Naive thymus-derived CD4-positive, alpha-beta T cell (primary cell): ENCODE measurements at regions of chr3 and their contacts with region 1.

Region 1: DNA sequence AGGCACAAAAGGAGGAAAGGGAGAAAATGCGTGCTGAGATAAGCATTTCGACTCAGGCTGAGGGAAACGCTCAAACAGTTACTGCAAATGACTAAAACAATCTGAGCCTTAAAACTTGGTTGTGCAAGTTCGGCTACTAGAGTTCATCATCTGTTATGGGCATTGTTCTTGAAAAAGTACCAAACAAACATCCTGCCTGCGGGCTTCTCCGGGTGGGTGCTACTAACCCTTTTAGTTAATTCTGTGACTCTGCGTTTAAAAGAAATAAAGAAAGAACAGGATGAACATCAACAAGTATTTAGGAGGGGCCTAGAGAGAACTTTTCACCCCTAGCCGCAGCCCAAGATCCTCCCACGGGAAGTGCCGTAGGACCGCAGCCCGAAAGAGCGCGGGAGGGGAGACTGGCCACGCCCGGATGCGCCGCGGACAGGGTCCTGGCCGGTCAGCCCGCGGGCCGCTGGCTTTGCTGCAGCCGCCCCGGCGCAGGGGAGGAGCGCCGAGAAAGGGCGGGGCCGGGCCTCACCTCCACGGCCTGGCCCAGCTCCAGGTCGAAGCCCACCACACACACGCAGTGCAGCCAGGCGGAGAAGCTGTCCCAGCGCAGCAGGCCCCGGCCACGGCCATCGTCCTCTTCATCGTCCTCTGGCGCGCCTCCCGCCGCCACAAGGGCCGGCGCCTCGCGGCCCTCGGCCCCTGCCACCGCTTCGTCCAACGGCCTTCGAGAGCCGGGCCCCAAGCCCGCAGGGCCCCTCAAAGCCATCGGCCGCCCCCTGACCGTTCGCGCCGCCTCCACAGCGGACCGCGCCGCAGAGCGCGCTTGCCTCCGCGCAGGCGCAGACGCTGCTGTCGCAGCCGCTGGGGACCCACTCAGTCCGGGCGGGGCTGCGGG is at the start of gene DENND6A:
- DNase-seq: peak; percentile 88 to 96 (median 94)
- ATAC-seq: peak; percentile 89
- H3K4me3 ChIP-seq: peak within 1 kb of the TSS; percentile 81
- H3K4me3 Mint-ChIP-seq: peak within 1 kb of the TSS; percentile 82 to 98 (median 93)
- H3K27ac ChIP-seq: peak within 1 kb of the TSS; percentile 87
- H3K27ac Mint-ChIP-seq: peak within 1 kb of the TSS; percentile 88 to 96 (median 93)
- H3K4me1 ChIP-seq: peaks cover 30 to 35% of the 10 kb centered on the region in 2 donors
- H3K4me1 Mint-ChIP-seq: peaks cover 19 to 42% (median 39%) of the 10 kb centered on the region in 7 donors
- H3K27me3 ChIP-seq: no peaks in the 10 kb centered on the region
- H3K27me3 Mint-ChIP-seq: peaks cover 0 to 2% (median 0%) of the 10 kb centered on the region in 5 donors
- total RNA-seq, gene DENND6A: 31.3 to 76.6 (median 40.8) TPM

Region 2: DNA sequence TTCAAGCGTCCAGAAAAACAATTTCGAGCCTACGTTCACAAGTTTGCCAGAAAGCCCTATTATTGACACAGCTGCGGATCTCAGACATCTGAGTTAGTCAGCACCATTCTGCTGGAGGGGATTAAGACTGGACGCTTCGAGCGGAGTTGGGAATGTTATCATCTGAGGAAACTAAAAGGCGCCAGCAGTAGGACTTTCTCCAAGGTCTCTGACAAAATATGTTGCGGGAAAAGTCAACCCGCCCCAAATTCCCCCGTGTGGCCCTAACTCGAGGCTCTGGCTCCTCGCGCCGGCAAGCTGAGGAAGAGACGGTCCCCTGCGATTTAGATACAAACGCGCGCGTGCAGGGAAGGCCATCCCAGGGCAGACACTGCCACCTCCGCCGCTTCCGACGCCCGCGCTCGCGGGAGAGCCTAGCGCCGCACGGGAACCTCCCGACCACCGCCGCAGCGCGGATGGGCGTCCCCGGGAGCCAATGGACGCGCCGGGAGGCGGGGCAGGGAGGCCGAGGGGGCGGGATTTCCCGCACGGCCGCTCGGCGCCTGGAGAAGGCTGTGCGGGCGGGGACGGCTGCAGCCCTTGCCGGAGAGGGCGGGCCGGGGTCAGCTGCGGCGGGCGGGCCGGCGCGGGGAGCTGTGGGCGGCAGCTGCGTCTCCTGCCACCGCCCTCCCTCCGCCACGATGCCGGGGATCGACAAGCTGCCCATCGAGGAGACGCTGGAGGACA is 465.1 kb before region 1 on chr3 and contains the start of gene APPL1:
- CTCF ChIA-PET with region 1: no interaction called
- POLR2A ChIA-PET with region 1: no interaction called
- intact Hi-C with region 1: loop called in 1 of 2 experiments (anchors 5 kb)
- DNase-seq: peak; percentile 76 to 97 (median 82)
- ATAC-seq: peak; percentile 96
- H3K4me3 ChIP-seq: peak within 1 kb of the TSS; percentile 88
- H3K4me3 Mint-ChIP-seq: peak within 1 kb of the TSS; percentile 89 to 95 (median 93)
- H3K27ac ChIP-seq: peak within 1 kb of the TSS; percentile 71
- H3K27ac Mint-ChIP-seq: peak within 1 kb of the TSS; percentile 72 to 90 (median 86)
- H3K4me1 ChIP-seq: peaks cover 9 to 12% of the 10 kb centered on the region in 2 donors
- H3K4me1 Mint-ChIP-seq: peaks cover 17 to 38% (median 29%) of the 10 kb centered on the region in 7 donors
- H3K27me3 ChIP-seq: no peaks in the 10 kb centered on the region
- H3K27me3 Mint-ChIP-seq: peaks cover 0 to 5% (median 0%) of the 10 kb centered on the region in 5 donors
- total RNA-seq, gene APPL1: 25.4 to 42.1 (median 29.2) TPM

Region 3: GRCh38 chr3:57545636-57546268 is 146.8 kb before region 1 on chr3:
- CTCF ChIA-PET with region 1: no interaction called
- POLR2A ChIA-PET with region 1: no interaction called
- intact Hi-C with region 1: no loop called
- DNase-seq: no peak
- ATAC-seq: no peak
- H3K4me3 ChIP-seq: no peak overlapping the region
- H3K4me3 Mint-ChIP-seq: no peak overlapping the region
- H3K27ac ChIP-seq: no peak overlapping the region
- H3K27ac Mint-ChIP-seq: no peak overlapping the region
- H3K4me1 ChIP-seq: no peaks in the 10 kb centered on the region
- H3K4me1 Mint-ChIP-seq: peaks cover 0 to 10% (median 8%) of the 10 kb centered on the region in 7 donors
- H3K27me3 ChIP-seq: no peaks in the 10 kb centered on the region
- H3K27me3 Mint-ChIP-seq: peaks cover 0 to 12% (median 8%) of the 10 kb centered on the region in 5 donors

Region 4: GRCh38 chr3:57597122-57597923 is 95.2 kb before region 1 on chr3 and contains the start of gene ARF4:
- CTCF ChIA-PET with region 1: no interaction called
- POLR2A ChIA-PET with region 1: interaction called, 36 read pairs
- intact Hi-C with region 1: loop called (anchors 1 kb)
- DNase-seq: peak; percentile 99 to 100 (median 100)
- ATAC-seq: peak; percentile 93
- H3K4me3 ChIP-seq: peak within 1 kb of the TSS; percentile 86
- H3K4me3 Mint-ChIP-seq: peak within 1 kb of the TSS; percentile 91 to 99 (median 98)
- H3K27ac ChIP-seq: peak within 1 kb of the TSS; percentile 94
- H3K27ac Mint-ChIP-seq: peak within 1 kb of the TSS; percentile 95 to 100 (median 99)
- H3K4me1 ChIP-seq: peaks cover 29 to 30% of the 10 kb centered on the region in 2 donors
- H3K4me1 Mint-ChIP-seq: peaks cover 33 to 64% (median 51%) of the 10 kb centered on the region in 7 donors
- H3K27me3 ChIP-seq: no peaks in the 10 kb centered on the region
- H3K27me3 Mint-ChIP-seq: no peaks in the 10 kb centered on the region
- total RNA-seq, gene ARF4: 50.9 to 85.5 (median 57.5) TPM

Region 5: DNA sequence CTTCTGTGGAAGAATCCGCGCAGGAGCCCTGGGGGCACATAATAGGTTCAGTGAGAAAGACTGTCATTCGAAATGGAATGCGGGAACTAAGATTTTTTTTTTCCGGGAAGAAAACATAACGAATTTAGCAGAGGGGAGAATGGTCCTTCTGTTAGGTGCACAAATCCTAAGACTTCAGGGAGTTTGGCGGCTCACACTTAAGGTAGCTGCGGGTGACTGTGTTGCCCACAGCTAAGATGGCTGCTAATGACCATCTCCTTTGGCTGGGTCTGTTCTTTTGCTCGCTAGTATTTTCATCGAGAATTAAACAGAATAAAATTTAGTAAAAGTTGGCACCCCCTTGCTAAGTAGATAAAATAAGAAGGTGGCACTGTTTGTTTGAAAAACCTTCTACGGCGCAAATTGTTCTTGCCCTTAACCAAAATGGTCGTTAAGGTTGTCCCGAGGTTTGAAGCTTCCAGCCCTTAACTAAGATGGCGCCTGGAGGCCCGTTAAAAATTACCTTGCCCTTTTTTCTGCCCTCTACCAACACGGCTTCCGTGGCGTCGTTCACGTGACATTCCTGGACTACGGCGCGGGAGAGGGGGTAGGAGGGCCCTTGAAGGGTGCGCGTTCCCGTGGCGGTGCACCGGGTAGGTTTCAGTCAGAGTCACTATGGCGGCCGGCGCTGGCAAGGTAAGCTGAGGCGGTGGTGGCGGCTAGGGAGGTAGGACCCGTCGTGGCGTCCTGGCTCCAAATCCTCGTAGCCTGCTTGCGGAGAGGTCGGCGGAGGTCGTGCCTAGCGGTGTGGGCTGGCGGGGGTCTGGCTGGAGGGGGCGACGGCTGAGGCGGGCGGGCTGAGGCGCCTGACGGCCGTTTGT is 63.4 kb after region 1 on chr3 and contains the start of gene SLMAP:
- CTCF ChIA-PET with region 1: no interaction called
- POLR2A ChIA-PET with region 1: interaction called, 20 read pairs
- intact Hi-C with region 1: loop called (anchors 1 kb)
- DNase-seq: peak; percentile 84 to 97 (median 95)
- ATAC-seq: peak; percentile 98
- H3K4me3 ChIP-seq: peak within 1 kb of the TSS; percentile 80
- H3K4me3 Mint-ChIP-seq: peak within 1 kb of the TSS; percentile 92 to 98 (median 97)
- H3K27ac ChIP-seq: peak within 1 kb of the TSS; percentile 84
- H3K27ac Mint-ChIP-seq: peak within 1 kb of the TSS; percentile 88 to 96 (median 92)
- H3K4me1 ChIP-seq: peaks cover 23 to 29% of the 10 kb centered on the region in 2 donors
- H3K4me1 Mint-ChIP-seq: peaks cover 17 to 45% (median 41%) of the 10 kb centered on the region in 7 donors
- H3K27me3 ChIP-seq: no peaks in the 10 kb centered on the region
- H3K27me3 Mint-ChIP-seq: peaks cover 0 to 8% (median 0%) of the 10 kb centered on the region in 5 donors
- total RNA-seq, gene SLMAP: 54.6 to 77.1 (median 66.6) TPM

Region 6: GRCh38 chr3:58034738-58035523 is 342.4 kb after region 1 on chr3:
- CTCF ChIA-PET with region 1: no interaction called
- POLR2A ChIA-PET with region 1: no interaction called
- intact Hi-C with region 1: loop called in 1 of 2 experiments (anchors 2 kb)
- DNase-seq: peak in 8 of 9 donors; percentile 41 to 83 (median 69)
- ATAC-seq: peak; percentile 95
- H3K4me3 ChIP-seq: no peak overlapping the region
- H3K4me3 Mint-ChIP-seq: peak overlapping the region; percentile 13 to 74 (median 50)
- H3K27ac ChIP-seq: peak overlapping the region; percentile 48
- H3K27ac Mint-ChIP-seq: peak overlapping the region; percentile 31 to 98 (median 93)
- H3K4me1 ChIP-seq: peaks cover 14 to 15% of the 10 kb centered on the region in 2 donors
- H3K4me1 Mint-ChIP-seq: peaks cover 27 to 84% (median 62%) of the 10 kb centered on the region in 7 donors
- H3K27me3 ChIP-seq: no peaks in the 10 kb centered on the region
- H3K27me3 Mint-ChIP-seq: peaks cover 0 to 2% (median 0%) of the 10 kb centered on the region in 5 donors